Sciatic nerve (tissue), 2 donors: ENCODE measurements at regions of chr10 and their contacts with region 1.

Region 1: DNA sequence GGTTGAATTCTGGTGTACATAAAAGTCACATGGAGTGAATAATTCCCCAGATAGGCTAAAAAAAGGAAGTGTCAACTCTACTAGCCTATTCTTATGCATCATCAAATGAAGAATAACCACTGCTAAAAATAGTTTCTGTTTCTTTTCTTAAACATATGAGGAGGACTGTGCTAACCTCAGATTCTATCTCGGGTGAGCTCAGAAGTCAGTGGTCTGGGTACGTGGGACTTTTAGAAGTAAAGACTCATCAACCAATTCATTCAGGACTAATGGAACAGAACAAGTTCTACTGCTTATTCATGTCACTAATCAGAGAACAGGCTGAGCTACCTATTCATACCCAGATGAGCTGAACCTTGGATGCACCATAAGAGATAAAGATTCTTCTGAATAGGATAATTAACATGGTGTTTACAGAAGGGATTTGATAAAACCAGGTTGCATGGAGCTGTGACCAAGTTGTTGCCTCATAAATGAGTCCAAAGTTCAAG is 9.5 kb upstream of the ASAH2 start:
- DNase-seq: no peak
- ATAC-seq: no peak

Region 2: DNA sequence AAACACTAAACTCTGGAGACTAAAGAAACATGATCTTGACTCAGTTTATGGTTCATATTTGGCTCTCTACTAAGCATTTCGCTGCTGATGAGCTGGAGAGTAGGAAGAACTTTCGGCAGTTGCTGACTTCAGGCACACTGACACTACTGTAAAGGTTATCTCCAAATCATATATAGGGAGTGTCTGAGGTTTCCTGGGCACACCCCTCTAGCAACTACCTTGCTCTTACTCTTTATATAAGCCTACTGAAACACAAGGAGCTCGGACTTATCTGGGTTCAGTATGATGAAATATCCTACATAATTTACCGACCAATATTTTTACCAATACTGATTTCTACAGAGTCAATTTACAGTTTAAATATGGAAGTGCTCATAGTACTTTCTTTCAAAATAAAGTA is 761.5 kb before region 1 on chr10:
- intact Hi-C with region 1: loop called (anchors 5 kb)
- DNase-seq: no peak
- ATAC-seq: no peak

Region 3: DNA sequence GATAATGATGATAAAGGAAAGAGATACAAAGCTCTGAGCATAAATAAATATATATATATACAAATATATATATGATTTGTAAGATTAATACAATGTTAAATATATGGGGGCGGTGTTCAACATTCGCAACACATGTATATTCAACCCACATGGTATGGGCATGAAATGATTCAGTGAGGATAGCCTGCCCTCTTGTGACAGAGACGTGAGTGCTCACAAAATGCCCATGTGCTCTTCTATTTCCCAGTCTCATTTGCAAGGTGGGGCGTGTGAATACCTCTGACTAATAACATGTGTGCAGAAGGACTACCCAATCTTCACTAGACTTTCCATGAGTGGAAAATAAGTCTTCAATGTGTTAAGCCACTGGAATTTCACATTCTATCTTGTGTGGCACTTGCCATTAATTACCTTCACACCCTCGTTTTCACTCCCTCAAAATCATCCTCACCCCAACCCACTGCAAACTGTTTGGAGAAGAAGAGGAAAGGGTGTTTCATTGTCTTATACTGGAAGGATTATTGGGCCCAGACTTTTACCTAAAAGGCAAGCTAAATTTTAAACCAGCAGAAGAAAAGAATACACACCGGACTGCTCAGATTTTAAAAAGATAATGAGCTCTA is 36.4 kb before region 1 on chr10:
- intact Hi-C with region 1: no loop called
- DNase-seq: no peak
- ATAC-seq: no peak

Region 4: DNA sequence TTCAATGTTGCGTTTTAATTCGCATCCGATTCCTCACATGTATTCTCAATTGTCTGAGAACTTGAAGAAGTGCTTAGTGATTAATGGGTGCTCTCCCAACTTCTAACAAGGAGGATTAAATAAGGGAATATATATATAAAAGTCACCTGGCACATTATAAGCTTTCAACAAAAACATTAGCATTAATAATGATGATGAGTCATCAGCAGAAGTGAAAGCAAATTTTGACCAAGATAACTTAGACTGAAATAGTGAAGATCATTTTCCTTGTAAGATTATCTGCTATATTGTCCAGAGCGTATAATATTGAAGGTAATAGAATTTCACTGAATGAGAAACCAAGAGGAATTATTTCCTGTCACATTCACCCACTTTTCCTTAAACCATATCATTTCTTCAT is 18.1 kb before region 1 on chr10:
- intact Hi-C with region 1: no loop called
- DNase-seq: no peak
- ATAC-seq: no peak

Region 5: DNA sequence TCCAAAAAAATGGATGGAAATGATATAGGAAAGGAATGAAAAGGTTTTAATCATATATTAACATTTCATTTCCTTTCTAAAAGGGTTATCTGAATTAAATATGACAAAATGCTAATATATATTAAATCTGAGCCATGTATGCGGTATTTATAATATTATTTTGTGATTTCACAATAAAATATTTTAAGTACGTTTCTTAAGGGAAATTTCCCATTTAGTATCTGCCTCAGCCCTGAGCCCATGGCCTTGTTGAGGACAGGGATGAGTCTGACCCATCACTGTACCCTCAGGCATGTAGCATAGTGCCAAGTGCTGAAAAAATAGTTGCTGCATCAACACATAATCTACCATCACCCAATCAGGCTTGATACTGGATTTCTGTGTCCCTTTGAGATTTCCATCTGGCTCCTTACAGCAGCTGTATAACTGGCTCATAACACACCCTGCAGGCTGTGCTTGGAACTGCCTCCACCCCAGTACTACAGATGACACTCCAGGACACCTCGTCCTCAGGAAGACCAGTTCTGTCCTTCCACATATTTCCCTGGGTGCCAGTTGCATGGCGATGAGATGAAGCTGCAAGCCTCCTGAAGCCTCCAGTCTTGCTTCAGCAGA is 49.8 kb after region 1 on chr10:
- intact Hi-C with region 1: no loop called
- DNase-seq: no peak
- ATAC-seq: no peak

Region 6: GRCh38 chr10:50410066-50410811 is 149.4 kb after region 1 on chr10:
- intact Hi-C with region 1: no loop called
- DNase-seq: no peak
- ATAC-seq: peak; percentile 22